MCF 10A (cell line): ENCODE measurements at regions of chr1 and their contacts with region 1.

Region 1: GRCh38 chr1:41516168-41517061 is 31.9 kb upstream of the EDN2 start:
- DNase-seq: peak; percentile 84
- H3K4me3 Mint-ChIP-seq: peak overlapping the region; percentile 32
- H3K27ac Mint-ChIP-seq: no peak overlapping the region
- H3K4me1 Mint-ChIP-seq: peaks cover 21% of the 10 kb centered on the region
- H3K27me3 Mint-ChIP-seq: no peaks in the 10 kb centered on the region
- CTCF ChIP-seq: peak; percentile 84

Region 2: DNA sequence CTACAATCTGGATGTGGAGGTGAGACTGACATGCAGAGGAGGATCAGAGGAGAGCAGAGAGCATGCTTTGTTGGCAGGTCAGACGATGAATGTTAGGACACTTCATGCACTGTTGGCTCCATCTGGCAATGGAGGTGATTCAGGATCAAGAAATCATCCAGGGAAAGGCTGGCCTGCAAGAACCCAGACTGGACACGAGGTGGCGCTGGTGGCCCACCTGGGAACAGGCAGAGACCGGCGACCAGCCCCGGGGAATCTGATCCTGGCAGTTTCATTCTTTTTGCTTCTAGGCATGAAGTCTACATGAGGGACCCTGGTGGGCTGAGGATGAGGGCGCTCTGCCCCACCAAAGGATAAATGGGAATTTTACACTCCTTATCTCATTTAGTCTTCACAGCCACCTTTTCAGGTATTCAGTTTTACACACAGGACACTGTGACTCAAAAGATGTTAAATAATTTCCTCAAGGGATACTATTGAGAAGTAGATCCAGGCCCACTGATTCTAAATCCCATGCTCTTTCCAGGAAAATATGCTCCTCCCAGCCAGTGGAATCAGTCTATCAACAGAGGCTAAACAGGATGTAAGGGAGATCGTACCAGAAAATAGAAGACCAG is 248.2 kb before region 1 on chr1:
- CTCF ChIA-PET with region 1: interaction called, 6 read pairs
- POLR2A ChIA-PET with region 1: interaction called, 3 read pairs
- intact Hi-C with region 1: loop called (anchors 1 kb)
- DNase-seq: peak; percentile 72
- H3K4me3 Mint-ChIP-seq: no peak overlapping the region
- H3K27ac Mint-ChIP-seq: no peak overlapping the region
- H3K4me1 Mint-ChIP-seq: peaks cover 6% of the 10 kb centered on the region
- H3K27me3 Mint-ChIP-seq: no peaks in the 10 kb centered on the region
- CTCF ChIP-seq: peak; percentile 93

Region 3: GRCh38 chr1:41474490-41475271 is 41.7 kb before region 1 on chr1:
- CTCF ChIA-PET with region 1: interaction called, 16 read pairs
- POLR2A ChIA-PET with region 1: interaction called, 3 read pairs
- intact Hi-C with region 1: no loop called
- DNase-seq: no peak
- H3K4me3 Mint-ChIP-seq: no peak overlapping the region
- H3K27ac Mint-ChIP-seq: peak overlapping the region; percentile 51
- H3K4me1 Mint-ChIP-seq: peaks cover 31% of the 10 kb centered on the region
- H3K27me3 Mint-ChIP-seq: no peaks in the 10 kb centered on the region
- CTCF ChIP-seq: no peak

Region 4: GRCh38 chr1:41496080-41497055 is 20.0 kb before region 1 on chr1:
- CTCF ChIA-PET with region 1: interaction called, 18 read pairs
- POLR2A ChIA-PET with region 1: interaction called, 7 read pairs
- intact Hi-C with region 1: loop called (anchors 1 kb)
- DNase-seq: peak; percentile 88
- H3K4me3 Mint-ChIP-seq: peak overlapping the region; percentile 36
- H3K27ac Mint-ChIP-seq: peak overlapping the region; percentile 91
- H3K4me1 Mint-ChIP-seq: peaks cover 58% of the 10 kb centered on the region
- H3K27me3 Mint-ChIP-seq: no peaks in the 10 kb centered on the region
- CTCF ChIP-seq: no peak

Region 5: GRCh38 chr1:41573785-41574713 is 57.6 kb after region 1 on chr1:
- CTCF ChIA-PET with region 1: interaction called, 22 read pairs
- POLR2A ChIA-PET with region 1: no interaction called
- intact Hi-C with region 1: no loop called
- DNase-seq: peak; percentile 82
- H3K4me3 Mint-ChIP-seq: no peak overlapping the region
- H3K27ac Mint-ChIP-seq: no peak overlapping the region
- H3K4me1 Mint-ChIP-seq: no peaks in the 10 kb centered on the region
- H3K27me3 Mint-ChIP-seq: no peaks in the 10 kb centered on the region
- CTCF ChIP-seq: peak; percentile 92